ENCODE measurements at regions of chr6 and their contacts with region 1.

Region 1: DNA sequence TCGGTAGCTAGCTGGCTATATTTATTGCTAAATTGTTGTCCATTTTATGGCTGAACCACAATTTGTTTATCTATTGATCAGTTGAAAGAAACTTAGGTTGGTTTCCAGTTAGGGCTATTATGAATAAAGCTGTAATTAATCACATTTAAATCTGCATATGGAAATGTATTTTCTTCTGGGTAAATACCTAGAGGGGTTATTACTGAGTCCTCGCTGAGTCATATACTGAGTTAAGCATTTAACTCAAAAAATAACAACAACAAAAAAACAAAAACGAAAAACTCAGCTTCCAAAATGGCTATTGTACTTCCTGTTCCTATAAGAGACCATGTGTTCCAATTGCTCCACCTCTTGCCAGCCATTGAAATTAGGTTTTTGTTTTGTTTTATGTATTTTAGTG is 258.2 kb downstream of the TBC1D32 start:
- DNase-seq: no peak
- H3K4me3 ChIP-seq: no peak overlapping the region
- H3K27ac ChIP-seq: no peak overlapping the region
- H3K4me1 ChIP-seq: no peaks in the 10 kb centered on the region
- H3K27me3 ChIP-seq: no peaks in the 10 kb centered on the region
- CTCF ChIP-seq: no peak

Region 2: DNA sequence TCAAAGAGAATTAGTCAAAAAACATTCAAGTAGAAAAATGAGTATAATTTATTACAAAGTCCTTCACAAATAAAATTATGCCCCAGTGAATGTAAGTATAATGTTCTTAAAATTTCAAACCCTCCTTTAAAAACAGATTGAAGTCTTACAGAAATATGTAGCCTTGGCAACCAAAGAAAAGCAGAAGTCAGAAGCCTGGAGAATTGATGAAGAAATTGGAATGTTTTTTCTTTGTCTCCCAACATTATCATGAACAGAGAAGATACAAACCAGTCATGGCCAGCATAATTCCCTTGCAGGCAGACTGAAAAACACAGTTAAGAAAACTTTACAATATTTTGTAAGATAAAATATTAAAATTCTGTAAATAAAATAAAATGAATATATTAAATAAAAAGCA is 36.2 kb after region 1 on chr6:
- CTCF ChIA-PET with region 1: no interaction called
- POLR2A ChIA-PET with region 1: no interaction called
- intact Hi-C with region 1: no loop called
- DNase-seq: no peak
- H3K4me3 ChIP-seq: no peak overlapping the region
- H3K27ac ChIP-seq: no peak overlapping the region
- H3K4me1 ChIP-seq: no peaks in the 10 kb centered on the region
- H3K27me3 ChIP-seq: no peaks in the 10 kb centered on the region
- CTCF ChIP-seq: no peak

Region 3: GRCh38 chr6:121830736-121831135 is 754.6 kb after region 1 on chr6:
- CTCF ChIA-PET with region 1: no interaction called
- POLR2A ChIA-PET with region 1: interaction called, 19 read pairs
- intact Hi-C with region 1: no loop called
- DNase-seq: peak in 1 of 2 experiments; percentile 21
- H3K4me3 ChIP-seq: no peak overlapping the region
- H3K27ac ChIP-seq: no peak overlapping the region
- H3K4me1 ChIP-seq: no peaks in the 10 kb centered on the region
- H3K27me3 ChIP-seq: no peaks in the 10 kb centered on the region
- CTCF ChIP-seq: no peak